ENCODE measurements at regions of chr10 and their contacts with region 1.

Region 1: DNA sequence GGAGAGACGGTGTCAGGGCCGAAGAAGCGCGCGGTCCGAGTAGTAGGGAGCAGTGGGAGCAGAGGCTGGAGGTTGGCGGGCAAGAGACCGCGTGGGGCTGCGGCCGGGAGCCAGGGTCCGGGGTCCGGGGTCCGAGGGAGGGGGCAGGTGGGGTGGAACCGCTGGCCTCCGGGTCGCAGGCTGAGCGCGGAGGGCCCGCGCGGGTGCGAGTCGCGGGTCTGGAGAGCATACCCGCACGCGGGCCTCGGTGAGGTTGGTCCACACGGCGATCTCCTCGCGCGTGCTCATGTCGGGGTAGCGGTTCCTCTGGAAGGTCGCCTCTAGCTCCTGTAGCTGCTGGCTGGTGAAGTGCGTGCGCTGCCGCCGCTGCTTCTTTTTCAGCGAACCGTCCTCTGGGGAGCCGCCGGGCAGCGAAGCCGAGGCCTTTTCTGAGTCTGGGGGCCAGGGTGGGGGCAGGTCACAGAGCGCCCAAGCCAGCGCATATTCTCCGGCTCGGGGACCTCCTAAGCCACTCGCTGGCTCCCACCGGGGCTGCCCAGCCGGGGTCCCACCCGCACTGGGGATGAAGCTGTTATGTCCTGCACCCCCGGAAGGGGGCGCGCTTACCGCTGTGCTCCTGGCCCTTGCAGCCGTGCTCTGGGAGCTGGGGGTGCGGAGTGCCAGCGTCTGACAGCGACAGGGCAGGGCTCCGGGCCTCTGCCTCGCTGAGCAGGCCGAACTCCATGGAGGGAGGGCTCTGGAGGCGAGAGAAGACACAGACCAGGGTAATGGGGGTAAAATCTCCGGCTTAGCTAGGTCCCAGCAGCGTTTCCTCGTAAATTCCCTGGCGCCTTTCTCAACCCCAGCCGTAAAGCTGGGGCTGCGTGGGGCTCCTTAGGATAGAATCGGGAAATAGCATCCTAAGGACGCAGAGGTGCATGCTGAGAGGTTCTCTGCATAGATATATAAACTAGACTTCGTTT is 5.5 kb downstream of the ELOVL3 start:
- DNase-seq: peak; percentile 80
- H3K4me3 Mint-ChIP-seq: peak overlapping the region; percentile 61
- H3K27ac Mint-ChIP-seq: no peak overlapping the region
- H3K4me1 Mint-ChIP-seq: peaks cover 22% of the 10 kb centered on the region
- H3K27me3 Mint-ChIP-seq: peaks cover 93% of the 10 kb centered on the region

Region 2: DNA sequence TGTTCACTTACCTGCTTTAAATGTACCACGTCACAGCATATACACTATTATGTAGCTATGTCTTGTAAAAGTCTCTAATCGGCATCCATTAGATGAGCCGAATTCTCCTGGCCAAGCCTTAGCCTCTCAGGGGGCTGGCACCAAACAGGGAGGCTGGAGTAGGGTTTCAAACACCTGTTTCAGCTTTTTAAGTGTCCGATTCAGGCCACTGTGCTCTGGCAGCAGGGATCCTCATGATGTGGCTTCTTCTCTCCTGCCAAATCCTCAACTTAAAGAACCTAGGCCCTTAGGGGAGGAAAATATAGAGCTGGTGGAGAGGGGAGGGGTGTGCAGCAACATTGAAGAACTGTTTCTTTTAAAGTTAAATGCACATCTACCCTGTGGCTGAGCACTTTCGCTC is 95.4 kb after region 1 on chr10:
- CTCF ChIA-PET with region 1: interaction called, 10 read pairs
- DNase-seq: no peak
- H3K4me3 Mint-ChIP-seq: no peak overlapping the region
- H3K27ac Mint-ChIP-seq: no peak overlapping the region
- H3K4me1 Mint-ChIP-seq: peaks cover 22% of the 10 kb centered on the region
- H3K27me3 Mint-ChIP-seq: no peaks in the 10 kb centered on the region

Region 3: GRCh38 chr10:102368072-102368471 is 136.4 kb after region 1 on chr10:
- CTCF ChIA-PET with region 1: interaction called, 10 read pairs
- DNase-seq: no peak
- H3K4me3 Mint-ChIP-seq: no peak overlapping the region
- H3K27ac Mint-ChIP-seq: no peak overlapping the region
- H3K4me1 Mint-ChIP-seq: no peaks in the 10 kb centered on the region
- H3K27me3 Mint-ChIP-seq: no peaks in the 10 kb centered on the region